HepG2 (cell line): ENCODE measurements at regions of chr13 and their contacts with region 1.

Region 1: GRCh38 chr13:112722433-112723250 is 32.8 kb downstream of the ATP11A start:
- DNase-seq: peak; percentile 78
- ATAC-seq: peak; percentile 51
- H3K4me3 ChIP-seq: peak overlapping the region; percentile 32 to 57 (median 44)
- H3K27ac ChIP-seq: peak overlapping the region; percentile 90
- H3K4me1 ChIP-seq: peaks cover 90% of the 10 kb centered on the region
- H3K27me3 ChIP-seq: no peaks in the 10 kb centered on the region
- CTCF ChIP-seq: no peak
- EP300 ChIP-seq: no peak; a peak in 1 of 4 replicates
- POLR2A ChIP-seq: no peak; a peak in 1 of 4 replicates
- RAD21 ChIP-seq: no peak

Region 2: DNA sequence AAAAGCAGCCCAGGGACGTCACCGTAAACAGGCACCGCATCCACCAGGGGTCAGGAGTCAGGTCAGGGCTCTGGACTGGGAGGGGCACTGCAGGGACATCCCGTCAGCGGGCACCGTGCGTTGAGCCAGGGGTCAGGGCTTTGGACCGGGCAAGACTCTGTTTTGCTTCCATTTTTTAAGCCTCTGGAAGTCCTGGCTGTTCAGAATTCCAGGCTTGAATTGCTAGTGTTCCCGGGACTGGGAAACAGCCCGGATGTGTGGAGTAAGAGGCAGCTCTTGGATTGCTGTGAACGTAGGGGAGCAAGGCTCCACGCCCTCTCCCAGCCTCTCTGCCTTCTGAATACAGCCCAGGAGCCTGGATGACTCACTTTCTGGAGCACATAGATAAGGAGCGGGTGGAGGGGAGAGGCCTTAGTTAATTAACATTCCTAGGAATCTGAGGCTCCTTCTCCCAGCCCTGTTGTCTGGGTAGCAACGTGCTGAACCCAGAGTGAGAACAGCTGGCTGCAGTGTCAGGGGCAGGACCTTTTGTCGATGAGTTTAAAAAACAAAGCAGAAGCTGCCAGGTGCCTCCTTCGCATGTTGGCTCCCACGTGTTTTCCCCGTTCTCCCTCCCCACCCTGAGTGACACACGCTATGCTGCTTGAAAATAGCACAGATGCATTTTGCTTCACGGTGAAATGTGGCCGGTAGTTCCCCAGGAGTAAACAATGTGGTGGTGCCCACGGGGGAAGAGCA is 10.9 kb before region 1 on chr13:
- CTCF ChIA-PET with region 1: no interaction called
- POLR2A ChIA-PET with region 1: interaction called, 14 read pairs
- in situ Hi-C with region 1: no loop called
- intact Hi-C with region 1: loop called (anchors 1 kb)
- DNase-seq: peak; percentile 76
- ATAC-seq: peak; percentile 91
- H3K4me3 ChIP-seq: peak overlapping the region; percentile 4 to 49 (median 39); a peak in 4 of 6 replicates
- H3K27ac ChIP-seq: peak overlapping the region; percentile 81
- H3K4me1 ChIP-seq: peaks cover 67% of the 10 kb centered on the region
- H3K27me3 ChIP-seq: no peaks in the 10 kb centered on the region
- CTCF ChIP-seq: peak; percentile 70
- EP300 ChIP-seq: no peak
- POLR2A ChIP-seq: no peak
- RAD21 ChIP-seq: 0 out of 2 replicates have a peak, but pooled peaks have one; percentile 38

Region 3: DNA sequence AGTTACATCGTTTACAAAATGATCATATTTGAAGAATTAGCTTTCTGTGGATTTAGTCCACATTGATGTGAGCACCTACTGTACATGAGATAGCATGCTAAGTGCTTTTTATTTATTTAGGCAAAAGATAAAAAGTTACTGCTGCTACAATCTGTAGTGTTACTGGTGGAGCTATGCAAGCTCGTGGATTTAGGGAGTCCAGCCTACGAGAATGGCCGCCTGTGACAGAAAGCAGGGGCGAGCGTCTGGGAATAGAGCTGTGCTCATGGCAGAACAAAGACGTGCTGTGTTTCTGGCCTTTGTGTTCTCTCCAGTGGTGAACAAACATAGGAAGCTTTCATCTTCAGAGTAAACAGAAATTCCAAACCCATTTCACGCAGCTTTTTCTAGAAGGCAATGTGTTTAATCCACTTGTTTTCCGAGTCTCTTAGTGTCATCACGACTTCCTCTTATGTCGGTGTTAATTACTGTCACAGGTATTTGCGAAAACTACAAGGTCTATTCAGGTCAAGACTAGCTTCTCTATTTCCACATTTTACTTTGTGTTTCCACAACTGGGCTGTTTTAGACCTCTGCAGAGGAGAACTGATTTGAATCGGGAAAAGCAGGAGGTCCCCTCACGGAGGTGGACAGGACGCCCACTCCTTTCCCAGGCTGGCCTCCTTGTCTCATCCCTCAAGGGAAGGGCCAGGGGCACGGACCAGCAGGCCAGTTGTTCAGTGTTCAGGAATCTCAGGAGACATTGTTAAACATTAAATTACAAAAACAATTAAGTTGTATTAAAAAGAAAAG is 34.5 kb after region 1 on chr13:
- CTCF ChIA-PET with region 1: no interaction called
- POLR2A ChIA-PET with region 1: interaction called, 10 read pairs
- in situ Hi-C with region 1: no loop called
- intact Hi-C with region 1: loop called (anchors 1 kb)
- DNase-seq: peak; percentile 99
- ATAC-seq: peak; percentile 96
- H3K4me3 ChIP-seq: peak overlapping the region; percentile 7 to 53 (median 14); a peak in 3 of 6 replicates
- H3K27ac ChIP-seq: peak overlapping the region; percentile 91
- H3K4me1 ChIP-seq: peaks cover 75% of the 10 kb centered on the region
- H3K27me3 ChIP-seq: no peaks in the 10 kb centered on the region
- CTCF ChIP-seq: no peak
- EP300 ChIP-seq: peak; percentile 41 to 95; a peak in 3 of 4 replicates
- POLR2A ChIP-seq: no peak; a peak in 1 of 4 replicates
- RAD21 ChIP-seq: peak; percentile 18; the same call in 1 of the 2 replicates

Region 4: DNA sequence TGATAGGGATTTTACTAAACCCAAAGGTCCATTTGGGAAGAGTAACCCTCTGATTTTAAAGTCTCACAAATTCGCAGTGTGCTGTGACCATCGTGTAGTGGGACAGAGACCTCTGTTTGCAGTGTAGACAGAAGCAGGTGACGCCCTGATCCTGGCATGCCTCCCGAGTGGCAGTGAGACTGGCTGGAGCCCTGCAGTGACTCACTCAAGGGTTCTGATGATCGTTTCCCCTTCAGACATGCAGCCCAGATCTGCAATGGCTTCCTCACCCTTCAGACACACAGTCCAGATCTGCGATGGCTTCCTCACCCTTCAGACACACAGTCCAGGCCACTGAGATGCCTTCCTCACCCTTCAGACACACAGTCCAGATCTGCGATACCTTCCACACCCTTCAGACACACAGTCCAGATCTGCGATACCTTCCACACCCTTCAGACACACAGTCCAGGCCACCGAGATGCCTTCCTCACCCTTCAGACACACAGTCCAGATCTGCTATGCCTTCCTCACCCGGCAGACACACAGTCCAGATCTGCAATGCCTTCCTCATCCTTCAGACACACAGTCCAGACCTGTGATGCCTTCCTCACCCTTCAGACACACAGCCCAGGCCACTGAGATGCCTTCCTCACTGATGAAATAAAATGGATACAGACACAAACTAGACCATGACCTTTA is 92.4 kb after region 1 on chr13:
- CTCF ChIA-PET with region 1: no interaction called
- POLR2A ChIA-PET with region 1: no interaction called
- in situ Hi-C with region 1: no loop called
- intact Hi-C with region 1: no loop called
- DNase-seq: no peak
- ATAC-seq: no peak
- H3K4me3 ChIP-seq: no peak overlapping the region
- H3K27ac ChIP-seq: no peak overlapping the region
- H3K4me1 ChIP-seq: no peaks in the 10 kb centered on the region
- H3K27me3 ChIP-seq: no peaks in the 10 kb centered on the region
- CTCF ChIP-seq: no peak
- EP300 ChIP-seq: no peak
- POLR2A ChIP-seq: no peak
- RAD21 ChIP-seq: no peak